CD8-positive, alpha-beta T cell (primary cell): ENCODE measurements at regions of chr7 and their contacts with region 1.

Region 1: DNA sequence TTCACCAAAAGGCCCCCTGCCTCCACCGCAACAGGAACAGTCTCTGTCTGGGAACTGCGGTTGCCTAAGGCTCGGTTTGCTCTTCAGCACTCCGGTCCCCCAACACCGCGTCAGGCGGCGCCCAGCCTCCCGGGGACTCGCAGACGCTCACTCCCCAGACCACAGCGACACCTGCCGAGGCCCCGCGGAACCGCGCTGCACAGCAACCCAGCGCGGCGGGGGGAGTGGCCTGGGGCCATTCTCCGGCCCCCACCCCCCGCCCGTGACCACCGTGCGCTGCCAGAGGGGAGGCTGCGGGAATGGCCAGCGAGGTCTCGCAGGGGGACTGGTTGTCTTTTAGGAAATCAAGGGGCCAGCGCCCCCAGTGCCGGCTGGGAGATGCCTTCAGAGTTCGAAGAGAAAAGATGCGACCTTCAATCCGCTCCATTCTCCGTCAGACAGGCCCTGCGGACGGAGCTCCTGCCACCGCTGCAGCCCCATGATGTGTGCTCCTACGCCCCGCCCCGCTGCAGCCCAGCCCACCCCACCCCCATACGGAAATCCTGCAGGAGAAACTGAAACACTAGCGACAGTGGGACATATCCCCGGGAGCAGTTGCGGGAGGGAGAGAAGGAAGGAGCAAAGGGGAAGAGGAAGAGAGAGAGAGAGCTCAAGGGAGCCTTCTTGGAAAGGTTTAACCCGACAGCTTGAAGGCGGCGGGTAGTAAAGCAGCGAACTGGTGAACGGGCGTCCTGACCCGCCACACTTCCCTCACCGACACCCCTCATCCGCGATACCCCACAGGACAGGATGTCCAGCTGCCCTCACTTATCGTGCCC is 137.4 kb upstream of the CDCA7L start:
- DNase-seq: peak; percentile 65 to 88 (median 81)
- ATAC-seq: peak; percentile 97
- H3K4me3 ChIP-seq: peak overlapping the region; percentile 47 to 61
- H3K4me3 Mint-ChIP-seq: peak overlapping the region; percentile 85
- H3K27ac ChIP-seq: peak overlapping the region in 1 of 2 experiments; percentile 57
- H3K27ac Mint-ChIP-seq: peak overlapping the region; percentile 82
- H3K4me1 ChIP-seq: peaks cover 7% of the 10 kb centered on the region
- H3K4me1 Mint-ChIP-seq: peaks cover 13% of the 10 kb centered on the region
- H3K27me3 ChIP-seq: peaks cover 0 to 5% of the 10 kb centered on the region in 2 experiments
- H3K27me3 Mint-ChIP-seq: peaks cover 18% of the 10 kb centered on the region
- CTCF ChIP-seq: peak; percentile 93

Region 2: DNA sequence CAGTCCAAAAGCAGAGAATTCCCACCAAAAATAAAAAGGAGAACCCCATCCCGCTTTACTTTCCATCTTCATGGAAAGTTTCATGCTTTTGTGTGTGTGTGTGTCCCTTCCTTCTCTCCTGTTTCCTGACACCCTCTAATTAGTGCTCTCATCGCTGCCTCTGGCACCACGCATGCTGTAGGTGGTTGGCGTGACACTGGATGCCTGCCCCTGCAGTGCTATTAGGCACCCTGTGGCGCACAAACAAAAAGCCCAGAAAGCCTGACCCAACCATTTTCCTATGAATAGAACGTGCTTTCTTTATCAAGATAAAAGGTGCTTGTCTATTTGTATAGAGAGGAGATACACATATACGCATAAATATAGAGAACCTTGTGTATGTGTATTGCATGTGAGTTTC is 16.6 kb before region 1 on chr7:
- CTCF ChIA-PET with region 1: interaction called, 23 read pairs
- POLR2A ChIA-PET with region 1: no interaction called
- intact Hi-C with region 1: no loop called
- DNase-seq: no peak
- ATAC-seq: no peak
- H3K4me3 ChIP-seq: no peak overlapping the region
- H3K4me3 Mint-ChIP-seq: no peak overlapping the region
- H3K27ac ChIP-seq: no peak overlapping the region
- H3K27ac Mint-ChIP-seq: no peak overlapping the region
- H3K4me1 ChIP-seq: no peaks in the 10 kb centered on the region
- H3K4me1 Mint-ChIP-seq: no peaks in the 10 kb centered on the region
- H3K27me3 ChIP-seq: no peaks in the 10 kb centered on the region
- H3K27me3 Mint-ChIP-seq: peaks cover 7% of the 10 kb centered on the region
- CTCF ChIP-seq: no peak

Region 3: DNA sequence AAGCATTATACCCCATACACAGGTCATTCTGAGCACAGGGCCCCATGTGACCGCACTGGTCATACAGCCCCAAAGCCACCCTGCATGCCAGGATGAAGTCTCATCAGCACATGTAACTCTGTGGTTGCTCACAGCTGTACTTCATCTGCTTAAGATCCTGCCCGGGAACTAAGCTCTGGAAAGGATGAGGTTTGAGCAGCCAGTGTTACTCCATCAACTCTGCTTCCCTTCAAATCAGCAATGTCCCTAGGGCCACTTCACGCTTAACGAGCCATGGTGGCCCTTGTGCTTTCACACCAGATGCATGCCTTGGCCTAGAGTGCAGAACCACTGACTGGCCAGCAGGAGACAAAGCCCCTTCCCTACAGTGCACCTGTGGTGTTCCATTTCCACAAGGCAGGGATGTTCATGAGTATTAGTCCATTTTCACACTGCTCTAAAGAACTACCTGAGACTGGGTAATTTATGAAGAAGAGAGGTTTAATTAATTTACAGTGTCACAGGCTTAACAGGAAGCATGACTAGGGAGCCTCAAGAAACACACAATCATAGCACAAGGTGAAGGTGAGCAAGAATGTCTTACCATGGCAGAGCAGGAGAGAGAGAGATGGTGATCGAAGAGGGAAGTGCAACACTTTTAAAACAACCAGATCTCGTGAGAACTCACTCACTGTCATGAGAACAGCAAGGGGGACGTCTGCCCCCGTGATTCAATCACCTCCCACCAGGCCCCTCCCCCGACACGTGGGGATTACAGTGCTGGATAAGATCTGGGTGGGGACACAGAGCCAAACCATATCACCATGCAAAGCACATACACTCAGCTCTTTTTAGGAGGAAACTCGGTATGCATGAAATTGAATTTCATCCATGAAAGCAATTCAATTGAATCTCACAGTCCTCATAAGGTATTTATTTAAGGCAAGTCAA is 11.6 kb after region 1 on chr7:
- CTCF ChIA-PET with region 1: interaction called, 29 read pairs
- POLR2A ChIA-PET with region 1: no interaction called
- intact Hi-C with region 1: no loop called
- DNase-seq: no peak
- ATAC-seq: no peak
- H3K4me3 ChIP-seq: no peak overlapping the region
- H3K4me3 Mint-ChIP-seq: no peak overlapping the region
- H3K27ac ChIP-seq: no peak overlapping the region
- H3K27ac Mint-ChIP-seq: no peak overlapping the region
- H3K4me1 ChIP-seq: no peaks in the 10 kb centered on the region
- H3K4me1 Mint-ChIP-seq: no peaks in the 10 kb centered on the region
- H3K27me3 ChIP-seq: no peaks in the 10 kb centered on the region
- H3K27me3 Mint-ChIP-seq: peaks cover 2% of the 10 kb centered on the region
- CTCF ChIP-seq: no peak